ENCODE measurements at regions of chr1 and their contacts with region 1.

Region 1: GRCh38 chr1:46616277-46617107 is at the start of gene MOB3C:
- DNase-seq: peak in 8 of 9 experiments; percentile 49 to 82 (median 73)
- ATAC-seq: peak; percentile 83
- H3K4me3 ChIP-seq: peak within 1 kb of the TSS; percentile 91 to 96
- H3K4me3 Mint-ChIP-seq: peak within 1 kb of the TSS; percentile 90
- H3K27ac ChIP-seq: peak within 1 kb of the TSS; percentile 88 to 89
- H3K27ac Mint-ChIP-seq: peak within 1 kb of the TSS; percentile 92
- H3K4me1 ChIP-seq: peaks cover 47% of the 10 kb centered on the region
- H3K4me1 Mint-ChIP-seq: peaks cover 51% of the 10 kb centered on the region
- H3K27me3 ChIP-seq: no peaks in the 10 kb centered on the region
- H3K27me3 Mint-ChIP-seq: no peaks in the 10 kb centered on the region
- CTCF ChIP-seq: no peak
- total RNA-seq, gene MOB3C: 8.0 to 8.6 TPM

Region 2: DNA sequence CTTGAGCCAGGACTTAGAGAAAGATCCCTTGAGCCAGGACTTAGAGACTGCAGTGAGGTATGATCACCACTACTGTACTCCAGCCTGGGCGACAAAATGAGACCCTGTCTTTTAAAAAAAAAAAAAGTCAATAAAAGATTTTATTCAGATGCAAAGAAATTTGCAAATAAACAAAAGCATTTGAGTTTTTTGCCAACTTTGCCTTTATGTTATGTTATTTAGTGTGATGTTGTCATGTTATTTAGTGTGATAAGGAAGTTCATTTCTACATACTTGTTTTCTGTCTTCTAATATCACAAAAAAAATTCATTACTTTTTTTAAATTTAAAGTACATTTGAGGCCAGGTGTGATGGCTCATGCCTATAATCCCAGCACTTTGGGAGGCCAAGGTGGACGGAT is 360.0 kb before region 1 on chr1:
- CTCF ChIA-PET with region 1: no interaction called
- POLR2A ChIA-PET with region 1: no interaction called
- intact Hi-C with region 1: no loop called
- DNase-seq: no peak
- ATAC-seq: no peak
- H3K4me3 ChIP-seq: no peak overlapping the region
- H3K4me3 Mint-ChIP-seq: no peak overlapping the region
- H3K27ac ChIP-seq: no peak overlapping the region
- H3K27ac Mint-ChIP-seq: no peak overlapping the region
- H3K4me1 ChIP-seq: no peaks in the 10 kb centered on the region
- H3K4me1 Mint-ChIP-seq: no peaks in the 10 kb centered on the region
- H3K27me3 ChIP-seq: no peaks in the 10 kb centered on the region
- H3K27me3 Mint-ChIP-seq: no peaks in the 10 kb centered on the region
- CTCF ChIP-seq: no peak

Region 3: DNA sequence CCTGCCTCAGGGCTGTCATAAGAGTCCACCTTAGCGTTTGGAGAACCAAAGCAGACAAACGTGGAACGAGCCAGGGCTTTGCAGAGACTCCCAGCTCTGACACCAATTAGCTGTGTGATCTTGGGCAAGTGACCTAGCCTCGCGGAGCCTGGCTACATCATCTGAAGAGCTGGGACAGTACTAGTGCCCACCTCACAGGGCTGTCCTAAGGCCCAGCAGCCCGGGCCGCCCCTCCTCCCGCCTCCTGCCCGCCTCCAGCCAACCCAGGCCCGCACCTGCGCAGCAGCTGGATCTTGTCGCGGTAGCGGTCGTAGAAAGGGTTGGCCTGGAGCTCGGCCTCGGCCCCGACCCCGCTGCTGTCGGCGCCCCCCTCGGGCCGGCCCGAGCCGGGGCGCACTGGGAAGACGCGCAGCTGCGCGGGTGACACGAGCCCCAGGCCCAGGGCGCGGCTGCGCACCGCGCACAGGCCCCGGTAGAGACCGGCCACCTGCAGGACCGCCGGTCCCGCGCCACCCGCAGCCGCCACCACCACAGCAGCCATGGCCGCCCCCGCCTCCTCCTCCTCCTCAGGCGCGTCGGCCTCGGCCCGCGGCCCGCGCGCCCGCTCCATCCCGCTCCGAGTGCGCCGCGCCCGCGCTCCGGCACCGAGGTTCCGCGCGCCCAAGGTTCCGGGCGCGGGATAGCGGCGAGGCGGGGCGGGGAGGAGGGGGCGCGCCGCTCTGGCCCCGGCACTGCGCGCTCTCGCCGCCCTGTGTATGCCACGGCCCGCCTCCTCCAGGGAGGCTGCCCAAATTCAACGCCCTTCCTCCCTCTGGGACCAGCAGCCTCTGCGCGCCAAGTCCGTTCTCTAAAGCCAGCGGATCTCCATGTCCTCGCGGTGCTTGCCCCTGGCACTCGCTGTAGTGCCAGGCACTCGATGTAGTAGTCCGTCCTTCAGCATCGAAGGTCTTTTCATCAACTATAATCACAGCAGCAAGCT is 51.6 kb after region 1 on chr1 and contains the start of gene ATPAF1:
- CTCF ChIA-PET with region 1: no interaction called
- POLR2A ChIA-PET with region 1: interaction called, 5 read pairs
- intact Hi-C with region 1: loop called (anchors 2 kb)
- DNase-seq: peak; percentile 15 to 79 (median 49)
- ATAC-seq: peak; percentile 91
- H3K4me3 ChIP-seq: peak within 1 kb of the TSS; percentile 52 to 77
- H3K4me3 Mint-ChIP-seq: no peak within 1 kb of the TSS
- H3K27ac ChIP-seq: peak within 1 kb of the TSS; percentile 49 to 66
- H3K27ac Mint-ChIP-seq: peak within 1 kb of the TSS; percentile 69
- H3K4me1 ChIP-seq: peaks cover 22% of the 10 kb centered on the region
- H3K4me1 Mint-ChIP-seq: peaks cover 29% of the 10 kb centered on the region
- H3K27me3 ChIP-seq: no peaks in the 10 kb centered on the region
- H3K27me3 Mint-ChIP-seq: no peaks in the 10 kb centered on the region
- CTCF ChIP-seq: no peak
- total RNA-seq, gene ATPAF1: 8.3 to 10.5 TPM

Region 4: DNA sequence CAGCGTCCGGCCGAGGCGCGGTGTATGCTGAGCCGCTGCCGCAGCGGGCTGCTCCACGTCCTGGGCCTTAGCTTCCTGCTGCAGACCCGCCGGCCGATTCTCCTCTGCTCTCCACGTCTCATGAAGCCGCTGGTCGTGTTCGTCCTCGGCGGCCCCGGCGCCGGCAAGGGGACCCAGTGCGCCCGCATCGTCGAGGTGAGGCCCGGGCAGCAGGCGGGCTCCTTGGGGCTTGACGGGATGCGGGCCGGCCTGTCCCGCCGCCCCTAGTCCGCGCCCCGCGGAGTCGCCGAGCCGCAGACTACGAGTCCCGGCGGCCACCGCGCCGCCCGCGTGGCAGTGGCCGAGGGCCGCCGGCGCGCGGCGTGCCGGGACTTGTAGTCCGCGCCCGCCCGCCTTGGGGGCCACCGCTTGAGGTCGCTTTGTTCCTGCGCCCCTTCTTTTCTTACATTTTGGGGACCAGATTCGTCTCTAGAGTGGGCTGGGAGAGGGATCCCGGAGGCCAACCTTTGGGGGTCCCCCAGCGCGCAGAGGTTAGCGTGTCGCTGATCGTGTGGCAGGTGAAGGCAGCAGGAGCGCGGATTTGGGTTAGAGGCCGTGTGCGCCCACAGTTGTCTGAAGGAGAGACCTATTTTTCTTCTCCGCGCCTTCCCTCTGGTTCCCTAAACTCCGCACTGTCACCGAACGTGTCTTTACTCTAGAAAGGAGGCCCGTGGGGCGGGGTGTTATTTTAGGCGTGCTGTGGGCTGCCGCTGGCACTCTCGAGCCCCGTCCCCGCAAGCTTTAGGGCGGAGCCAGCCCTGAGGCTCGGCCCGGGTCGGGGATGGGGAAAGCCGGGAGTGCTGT is 717.7 kb after region 1 on chr1:
- CTCF ChIA-PET with region 1: no interaction called
- POLR2A ChIA-PET with region 1: no interaction called
- intact Hi-C with region 1: loop called in 1 of 2 experiments (anchors 10 kb)
- DNase-seq: peak; percentile 39 to 89 (median 66)
- ATAC-seq: peak; percentile 89
- H3K4me3 ChIP-seq: peak overlapping the region; percentile 78 to 82
- H3K4me3 Mint-ChIP-seq: no peak overlapping the region
- H3K27ac ChIP-seq: peak overlapping the region; percentile 67 to 87
- H3K27ac Mint-ChIP-seq: peak overlapping the region; percentile 91
- H3K4me1 ChIP-seq: peaks cover 20% of the 10 kb centered on the region
- H3K4me1 Mint-ChIP-seq: peaks cover 16% of the 10 kb centered on the region
- H3K27me3 ChIP-seq: no peaks in the 10 kb centered on the region
- H3K27me3 Mint-ChIP-seq: no peaks in the 10 kb centered on the region
- CTCF ChIP-seq: no peak

Measured in CD8-positive, alpha-beta T cell (primary cell).